OCI-LY7 (cell line): ENCODE measurements at regions of chr5 and their contacts with region 1.

Region 1: GRCh38 chr5:139392678-139393496 is 2.0 kb downstream of the PROB1 start:
- DNase-seq: peak; percentile 94
- H3K4me3 ChIP-seq: peak overlapping the region; percentile 79
- H3K27ac ChIP-seq: peak overlapping the region; percentile 90
- H3K4me1 ChIP-seq: peaks cover 62% of the 10 kb centered on the region
- CTCF ChIP-seq: peak; percentile 81

Region 2: GRCh38 chr5:138418444-138418843 is 974.4 kb before region 1 on chr5:
- CTCF ChIA-PET with region 1: no interaction called
- POLR2A ChIA-PET with region 1: no interaction called
- intact Hi-C with region 1: no loop called
- DNase-seq: no peak
- H3K4me3 ChIP-seq: no peak overlapping the region
- H3K27ac ChIP-seq: no peak overlapping the region
- H3K4me1 ChIP-seq: no peaks in the 10 kb centered on the region
- CTCF ChIP-seq: no peak

Region 3: GRCh38 chr5:139246394-139246793 is 146.5 kb before region 1 on chr5:
- CTCF ChIA-PET with region 1: interaction called, 4 read pairs
- POLR2A ChIA-PET with region 1: interaction called, 3 read pairs
- intact Hi-C with region 1: loop called (anchors 1 kb)
- DNase-seq: no peak
- H3K4me3 ChIP-seq: no peak overlapping the region
- H3K27ac ChIP-seq: no peak overlapping the region
- H3K4me1 ChIP-seq: peaks cover 4% of the 10 kb centered on the region
- CTCF ChIP-seq: no peak

Region 4: GRCh38 chr5:139273572-139274289 is 119.2 kb before region 1 on chr5:
- CTCF ChIA-PET with region 1: no interaction called
- POLR2A ChIA-PET with region 1: interaction called, 5 read pairs
- intact Hi-C with region 1: loop called (anchors 5 kb)
- DNase-seq: peak; percentile 92
- H3K4me3 ChIP-seq: peak overlapping the region; percentile 91
- H3K27ac ChIP-seq: peak overlapping the region; percentile 74
- H3K4me1 ChIP-seq: peaks cover 48% of the 10 kb centered on the region
- CTCF ChIP-seq: 0 out of 2 replicates have a peak, but pooled peaks have one; percentile 29

Region 5: GRCh38 chr5:139293504-139294373 is 99.1 kb before region 1 on chr5 and contains the start of gene MATR3:
- CTCF ChIA-PET with region 1: no interaction called
- POLR2A ChIA-PET with region 1: interaction called, 6 read pairs
- intact Hi-C with region 1: loop called (anchors 1 kb)
- DNase-seq: peak; percentile 95
- H3K4me3 ChIP-seq: peak within 1 kb of the TSS; percentile 97
- H3K27ac ChIP-seq: peak within 1 kb of the TSS; percentile 84
- H3K4me1 ChIP-seq: peaks cover 42% of the 10 kb centered on the region
- CTCF ChIP-seq: no peak
- total RNA-seq, gene MATR3: 205 and 276 TPM in 2 replicates

Region 6: DNA sequence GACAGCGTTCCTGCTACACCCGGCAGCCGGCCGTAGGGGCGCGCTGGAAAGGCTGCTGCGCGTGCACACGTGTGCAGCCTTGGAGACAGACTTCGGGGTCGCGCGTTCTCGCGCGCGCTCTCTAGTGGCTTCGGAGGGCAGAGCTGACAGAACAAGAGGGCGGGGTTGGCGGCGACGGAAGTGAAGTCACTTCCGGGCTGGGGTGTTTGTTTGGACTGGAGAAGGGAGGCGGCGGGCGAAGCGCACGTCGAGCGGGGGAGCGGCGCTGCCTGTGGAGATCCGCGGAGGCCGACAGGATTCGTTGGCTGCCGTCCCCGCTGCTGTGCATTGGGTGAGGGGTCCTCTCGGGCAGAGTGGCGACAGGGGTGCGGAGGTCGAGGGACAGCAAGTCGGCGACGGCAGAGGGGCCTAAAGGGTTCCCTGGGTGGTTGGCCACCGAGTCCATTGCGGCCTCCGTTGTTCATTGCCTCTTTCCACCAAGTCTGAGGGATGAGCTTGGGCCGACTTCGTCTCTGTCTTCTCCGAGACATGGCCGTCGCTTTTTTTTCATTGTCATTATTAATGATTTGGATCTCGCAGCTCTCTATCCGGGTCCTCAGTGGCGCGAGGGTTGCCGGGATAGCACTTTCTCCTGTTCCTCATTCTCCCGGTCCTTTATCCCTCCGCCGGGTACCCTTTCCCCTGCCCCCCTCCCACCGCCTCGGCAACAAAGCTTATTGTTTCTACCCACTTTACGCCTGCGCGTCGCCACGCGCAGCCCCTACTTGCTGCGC is 51.1 kb before region 1 on chr5 and contains the start of gene PAIP2:
- CTCF ChIA-PET with region 1: interaction called, 3 read pairs
- POLR2A ChIA-PET with region 1: interaction called, 5 read pairs
- intact Hi-C with region 1: loop called (anchors 1 kb)
- DNase-seq: peak; percentile 97
- H3K4me3 ChIP-seq: peak within 1 kb of the TSS; percentile 88
- H3K27ac ChIP-seq: peak within 1 kb of the TSS; percentile 92
- H3K4me1 ChIP-seq: peaks cover 30% of the 10 kb centered on the region
- CTCF ChIP-seq: peak; percentile 79
- total RNA-seq, gene PAIP2: 64.3 and 73.6 TPM in 2 replicates

Region 7: GRCh38 chr5:139403787-139404483 is 11.0 kb after region 1 on chr5 and contains the start of gene SPATA24:
- CTCF ChIA-PET with region 1: interaction called, 12 read pairs
- POLR2A ChIA-PET with region 1: interaction called, 7 read pairs
- intact Hi-C with region 1: no loop called
- DNase-seq: peak; percentile 98
- H3K4me3 ChIP-seq: peak within 1 kb of the TSS; percentile 71
- H3K27ac ChIP-seq: peak within 1 kb of the TSS; percentile 83
- H3K4me1 ChIP-seq: peaks cover 43% of the 10 kb centered on the region
- CTCF ChIP-seq: no peak
- total RNA-seq, gene SPATA24: 12.0 and 12.4 TPM in 2 replicates

Region 8: DNA sequence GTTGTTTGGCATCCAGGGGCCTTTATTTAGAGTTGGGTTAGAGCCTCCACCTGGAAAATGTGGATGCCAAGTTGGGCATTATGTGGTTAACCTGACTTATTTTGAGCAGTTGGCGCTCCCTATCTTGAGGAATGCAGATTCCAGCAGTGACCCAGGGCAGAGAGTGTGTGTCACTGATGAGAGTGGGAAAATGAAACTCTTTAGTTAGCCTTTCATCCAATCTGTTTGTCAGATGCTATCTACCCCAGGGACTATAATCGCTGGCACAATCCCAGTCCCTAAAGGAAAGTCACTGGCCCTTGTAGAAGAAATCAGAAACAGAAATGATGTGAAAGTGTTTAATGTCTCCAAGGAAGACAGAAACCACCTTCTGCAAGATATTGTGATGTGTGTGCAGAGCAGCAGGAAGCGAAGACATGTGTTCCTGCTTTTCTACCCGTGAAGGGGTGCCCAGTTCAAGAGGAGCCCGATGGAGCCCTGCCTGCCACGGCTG is 99.9 kb after region 1 on chr5:
- CTCF ChIA-PET with region 1: no interaction called
- POLR2A ChIA-PET with region 1: no interaction called
- intact Hi-C with region 1: no loop called
- DNase-seq: no peak
- H3K4me3 ChIP-seq: no peak overlapping the region
- H3K27ac ChIP-seq: no peak overlapping the region
- H3K4me1 ChIP-seq: peaks cover 8% of the 10 kb centered on the region
- CTCF ChIP-seq: no peak

Region 9: GRCh38 chr5:139994234-139994633 is 601.3 kb after region 1 on chr5:
- CTCF ChIA-PET with region 1: no interaction called
- POLR2A ChIA-PET with region 1: no interaction called
- intact Hi-C with region 1: no loop called
- DNase-seq: no peak
- H3K4me3 ChIP-seq: no peak overlapping the region
- H3K27ac ChIP-seq: no peak overlapping the region
- H3K4me1 ChIP-seq: no peaks in the 10 kb centered on the region
- CTCF ChIP-seq: no peak